Activated naive CD4-positive, alpha-beta T cell treated with anti-CD3 and anti-CD28 coated beads for 36 hours (primary cell): ENCODE measurements at regions of chr7 and their contacts with region 1.

Region 1: GRCh38 chr7:44797329-44798251 is 1.1 kb downstream of the PPIA start:
- DNase-seq: peak; percentile 89
- H3K4me3 Mint-ChIP-seq: peak overlapping the region; percentile 98
- H3K27ac Mint-ChIP-seq: peak overlapping the region; percentile 98
- H3K4me1 Mint-ChIP-seq: peaks cover 30% of the 10 kb centered on the region
- H3K27me3 Mint-ChIP-seq: no peaks in the 10 kb centered on the region

Region 2: DNA sequence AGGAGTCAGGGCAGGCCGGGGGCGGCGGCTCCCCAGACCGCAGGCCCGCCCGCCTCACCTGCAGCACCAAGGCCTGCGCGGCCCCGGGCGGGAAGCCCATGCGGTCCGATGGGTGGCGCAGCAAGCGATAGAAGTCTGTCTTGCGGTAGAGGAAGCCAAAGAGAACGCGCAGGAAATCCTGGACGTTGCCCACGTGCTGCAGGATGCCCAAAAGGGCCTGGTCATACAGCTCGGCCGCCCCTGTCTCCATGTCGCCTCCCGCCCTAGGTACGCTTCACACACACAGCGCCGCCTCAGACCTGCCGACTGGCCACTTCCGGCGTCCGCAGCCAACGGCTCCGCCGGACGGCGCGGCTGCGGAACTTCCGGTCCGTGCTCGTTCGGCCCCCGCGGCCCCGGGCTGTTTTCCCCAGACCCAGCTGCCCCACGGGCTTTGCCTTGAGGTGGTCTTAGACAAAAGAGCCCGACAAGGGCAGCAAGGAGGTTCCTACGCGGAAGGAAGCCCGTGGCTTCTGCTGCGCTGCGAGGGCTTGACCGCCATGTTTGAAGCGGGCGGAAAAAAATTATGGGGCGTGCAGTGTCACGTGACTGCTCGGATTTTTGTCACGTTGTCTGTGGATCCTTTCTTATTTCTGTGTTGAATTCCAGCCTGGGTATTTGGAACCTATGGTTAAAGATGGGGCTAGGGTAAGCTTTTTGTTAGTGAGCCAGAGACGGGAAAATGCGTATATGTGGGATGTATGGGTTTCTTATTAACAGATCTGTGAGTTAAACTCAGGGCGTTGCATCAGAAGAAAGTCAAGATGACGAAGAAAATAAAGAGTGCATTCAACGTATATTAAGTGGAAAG is 307.0 kb before region 1 on chr7 and contains the start of gene NUDCD3:
- CTCF ChIA-PET with region 1: no interaction called
- intact Hi-C with region 1: loop called (anchors 2 kb)
- DNase-seq: peak; percentile 89
- H3K4me3 Mint-ChIP-seq: peak within 1 kb of the TSS; percentile 85
- H3K27ac Mint-ChIP-seq: peak within 1 kb of the TSS; percentile 94
- H3K4me1 Mint-ChIP-seq: peaks cover 41% of the 10 kb centered on the region
- H3K27me3 Mint-ChIP-seq: no peaks in the 10 kb centered on the region
- total RNA-seq, gene NUDCD3: 81.1 to 81.8 TPM

Region 3: GRCh38 chr7:44587843-44588711 is 209.5 kb before region 1 on chr7:
- CTCF ChIA-PET with region 1: interaction called, 5 read pairs
- intact Hi-C with region 1: loop called (anchors 1 kb)
- DNase-seq: peak; percentile 83
- H3K4me3 Mint-ChIP-seq: no peak overlapping the region
- H3K27ac Mint-ChIP-seq: no peak overlapping the region
- H3K4me1 Mint-ChIP-seq: peaks cover 4% of the 10 kb centered on the region
- H3K27me3 Mint-ChIP-seq: peaks cover 1% of the 10 kb centered on the region

Region 4: DNA sequence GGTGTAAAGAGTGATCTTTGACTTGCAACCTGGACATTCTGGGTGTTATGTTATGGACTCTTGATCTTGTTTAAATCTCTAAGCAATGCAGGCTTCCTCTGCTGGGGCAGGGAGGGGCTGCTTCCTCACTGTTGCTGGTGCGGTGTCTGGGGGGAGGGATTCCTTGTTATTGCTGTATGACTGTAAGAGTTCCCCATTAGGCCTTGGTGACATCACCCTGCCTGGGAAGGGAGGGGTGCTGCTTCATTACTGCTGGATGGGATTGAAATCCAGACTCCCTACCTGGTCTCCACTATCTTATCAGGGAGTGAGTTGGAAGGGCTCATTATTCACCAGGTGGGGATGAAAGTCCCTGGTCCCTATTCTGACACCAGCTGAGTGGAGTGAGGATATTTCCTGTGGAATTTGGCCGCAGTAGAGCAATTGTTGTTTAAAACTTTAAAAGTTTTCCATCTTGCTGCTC is 182.4 kb before region 1 on chr7:
- CTCF ChIA-PET with region 1: no interaction called
- intact Hi-C with region 1: loop called (anchors 1 kb)
- DNase-seq: peak; percentile 57
- H3K4me3 Mint-ChIP-seq: no peak overlapping the region
- H3K27ac Mint-ChIP-seq: peak overlapping the region; percentile 25
- H3K4me1 Mint-ChIP-seq: peaks cover 60% of the 10 kb centered on the region
- H3K27me3 Mint-ChIP-seq: no peaks in the 10 kb centered on the region

Region 5: GRCh38 chr7:44885394-44886317 is 88.1 kb after region 1 on chr7 and contains the start of gene PURB:
- CTCF ChIA-PET with region 1: interaction called, 3 read pairs
- intact Hi-C with region 1: loop called (anchors 1 kb)
- DNase-seq: peak; percentile 98
- H3K4me3 Mint-ChIP-seq: peak within 1 kb of the TSS; percentile 96
- H3K27ac Mint-ChIP-seq: peak within 1 kb of the TSS; percentile 100
- H3K4me1 Mint-ChIP-seq: peaks cover 46% of the 10 kb centered on the region
- H3K27me3 Mint-ChIP-seq: no peaks in the 10 kb centered on the region
- total RNA-seq, gene PURB: 12.9 to 13.1 TPM

Region 6: DNA sequence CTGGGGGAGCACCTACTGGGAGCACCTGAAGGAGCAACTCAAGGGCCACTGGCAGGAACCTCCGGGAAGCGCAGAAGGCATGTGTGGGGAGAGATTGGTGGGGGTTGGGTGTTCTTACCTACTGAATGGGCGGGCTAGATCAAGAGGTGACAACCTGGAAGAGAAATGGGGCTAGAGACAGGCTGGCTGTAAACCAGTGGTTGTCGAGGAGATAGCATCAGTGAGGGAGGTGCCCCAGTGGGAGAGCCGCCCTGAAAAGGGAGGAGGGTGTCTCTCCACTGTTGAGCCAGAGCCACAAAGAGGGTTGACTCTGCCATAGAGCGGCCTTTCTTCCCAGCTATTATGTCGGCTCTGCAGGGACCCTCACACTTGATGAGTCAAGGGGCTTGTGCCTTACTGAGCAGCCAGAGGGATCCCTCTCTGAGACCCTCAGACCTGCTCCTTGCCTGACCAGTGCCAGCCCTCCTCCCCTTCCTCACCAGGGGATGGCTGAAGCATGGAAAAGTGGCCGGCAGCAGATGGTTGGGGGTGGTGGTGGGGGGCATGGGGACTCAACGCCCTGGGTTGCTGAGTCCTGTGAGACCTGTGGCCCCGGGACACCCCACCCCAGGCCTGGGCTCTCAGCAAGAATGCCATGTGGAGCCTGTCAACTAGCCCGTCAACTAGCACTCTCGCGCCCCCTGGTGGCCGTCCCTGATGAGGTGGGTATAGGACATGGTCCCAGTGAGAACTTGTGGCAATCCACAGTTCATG is 124.2 kb after region 1 on chr7:
- CTCF ChIA-PET with region 1: no interaction called
- intact Hi-C with region 1: loop called (anchors 2 kb)
- DNase-seq: peak; percentile 99
- H3K4me3 Mint-ChIP-seq: no peak overlapping the region
- H3K27ac Mint-ChIP-seq: peak overlapping the region; percentile 30
- H3K4me1 Mint-ChIP-seq: peaks cover 8% of the 10 kb centered on the region
- H3K27me3 Mint-ChIP-seq: no peaks in the 10 kb centered on the region

Region 7: DNA sequence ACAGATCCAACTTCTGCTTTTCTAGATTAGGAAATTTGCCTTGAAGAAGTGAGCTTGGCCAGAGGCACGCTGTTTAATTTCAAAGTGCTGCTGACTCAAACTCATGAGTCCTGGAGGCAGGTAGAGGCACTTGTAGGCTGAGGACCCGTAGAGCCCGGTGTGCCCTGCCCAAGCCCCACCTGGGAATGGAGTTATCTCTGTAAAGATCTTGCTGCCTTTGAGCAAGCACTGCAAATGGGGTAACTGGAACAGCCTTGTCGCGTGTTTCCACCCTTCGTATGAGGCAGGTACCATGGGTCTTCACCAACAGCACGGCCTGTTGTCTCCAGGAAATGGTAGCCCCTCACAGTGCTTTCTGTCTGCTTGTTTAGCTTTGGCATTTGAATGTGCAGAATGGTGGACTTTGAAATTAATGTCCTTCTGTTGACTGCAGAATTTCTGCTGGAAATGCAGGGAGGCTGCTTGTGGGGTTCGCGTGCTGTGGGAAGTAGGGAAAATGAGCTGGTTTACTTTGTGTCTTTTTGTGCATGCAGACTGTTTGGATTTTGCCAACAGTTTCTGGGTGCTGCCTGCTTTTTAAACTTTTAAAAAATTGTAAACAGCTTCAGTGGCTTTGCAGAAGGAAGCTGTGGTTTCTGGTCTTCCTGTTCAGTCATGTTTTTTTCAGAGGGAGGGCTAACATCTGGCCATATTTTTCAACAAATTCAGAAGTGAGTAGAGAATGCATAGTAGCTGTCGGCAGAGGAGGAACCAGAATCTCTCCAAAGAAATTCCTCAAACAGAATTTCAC is 229.6 kb after region 1 on chr7:
- CTCF ChIA-PET with region 1: no interaction called
- intact Hi-C with region 1: no loop called
- DNase-seq: peak; percentile 29
- H3K4me3 Mint-ChIP-seq: peak overlapping the region; percentile 65
- H3K27ac Mint-ChIP-seq: peak overlapping the region; percentile 82
- H3K4me1 Mint-ChIP-seq: peaks cover 74% of the 10 kb centered on the region
- H3K27me3 Mint-ChIP-seq: no peaks in the 10 kb centered on the region